Activated T-helper 2 cell treated with anti-CD3 and anti-CD28 coated beads, Interferon-gamma antibody, Interleukin-2, Interleukin-4, amounts not matched to agents 10 μg/mL and 5 μg/mL and 100 μg/mL, durations not matched to agents 14 hours and 24 hours and 36 hours (primary cell): ENCODE measurements at regions of chr11 and their contacts with region 1.

Region 1: GRCh38 chr11:47269002-47269828 is 718 bp upstream of the MADD start:
- DNase-seq: peak; percentile 80
- H3K4me3 Mint-ChIP-seq: peak overlapping the region; percentile 84
- H3K27ac Mint-ChIP-seq: peak overlapping the region; percentile 97
- H3K4me1 Mint-ChIP-seq: peaks cover 53% of the 10 kb centered on the region
- H3K27me3 Mint-ChIP-seq: no peaks in the 10 kb centered on the region

Region 2: GRCh38 chr11:46700241-46701077 is 568.8 kb before region 1 on chr11 and contains the starts of genes ARHGAP1 and ZNF408:
- intact Hi-C with region 1: loop called (anchors 10 kb)
- DNase-seq: peak; percentile 99
- H3K4me3 Mint-ChIP-seq: peak within 1 kb of the TSS; percentile 96
- H3K27ac Mint-ChIP-seq: peak within 1 kb of the TSS; percentile 92
- H3K4me1 Mint-ChIP-seq: peaks cover 28% of the 10 kb centered on the region
- H3K27me3 Mint-ChIP-seq: no peaks in the 10 kb centered on the region
- total RNA-seq, gene ARHGAP1: 58.8 and 66.8 TPM in 2 replicates
- total RNA-seq, gene ZNF408: 10.2 and 12.2 TPM in 2 replicates

Region 3: GRCh38 chr11:47176328-47177228 is 92.6 kb before region 1 on chr11 and contains the start of gene ARFGAP2:
- intact Hi-C with region 1: loop called (anchors 1 kb)
- DNase-seq: peak; percentile 95
- H3K4me3 Mint-ChIP-seq: peak within 1 kb of the TSS; percentile 97
- H3K27ac Mint-ChIP-seq: peak within 1 kb of the TSS; percentile 100
- H3K4me1 Mint-ChIP-seq: peaks cover 28% of the 10 kb centered on the region
- H3K27me3 Mint-ChIP-seq: no peaks in the 10 kb centered on the region
- total RNA-seq, gene ARFGAP2: 98.6 and 104 TPM in 2 replicates

Region 4: GRCh38 chr11:47248664-47249377 is 20.4 kb before region 1 on chr11 and contains the start of gene ACP2:
- intact Hi-C with region 1: loop called (anchors 1 kb)
- DNase-seq: peak; percentile 85
- H3K4me3 Mint-ChIP-seq: peak within 1 kb of the TSS; percentile 98
- H3K27ac Mint-ChIP-seq: peak within 1 kb of the TSS; percentile 96
- H3K4me1 Mint-ChIP-seq: peaks cover 14% of the 10 kb centered on the region
- H3K27me3 Mint-ChIP-seq: no peaks in the 10 kb centered on the region
- total RNA-seq, gene ACP2: 23.2 and 24.5 TPM in 2 replicates

Region 5: GRCh38 chr11:47340980-47341775 is 72.0 kb after region 1 on chr11:
- intact Hi-C with region 1: no loop called
- DNase-seq: no peak
- H3K4me3 Mint-ChIP-seq: no peak overlapping the region
- H3K27ac Mint-ChIP-seq: no peak overlapping the region
- H3K4me1 Mint-ChIP-seq: no peaks in the 10 kb centered on the region
- H3K27me3 Mint-ChIP-seq: no peaks in the 10 kb centered on the region

Region 6: GRCh38 chr11:47407746-47408590 is 138.8 kb after region 1 on chr11 and contains the start of gene SLC39A13:
- intact Hi-C with region 1: loop called (anchors 5 kb)
- DNase-seq: peak; percentile 93
- H3K4me3 Mint-ChIP-seq: peak within 1 kb of the TSS; percentile 96
- H3K27ac Mint-ChIP-seq: peak within 1 kb of the TSS; percentile 89
- H3K4me1 Mint-ChIP-seq: peaks cover 17% of the 10 kb centered on the region
- H3K27me3 Mint-ChIP-seq: no peaks in the 10 kb centered on the region
- total RNA-seq, gene SLC39A13: 12.5 and 15.2 TPM in 2 replicates